ENCODE measurements at regions of chr3 and their contacts with region 1.

Region 1: DNA sequence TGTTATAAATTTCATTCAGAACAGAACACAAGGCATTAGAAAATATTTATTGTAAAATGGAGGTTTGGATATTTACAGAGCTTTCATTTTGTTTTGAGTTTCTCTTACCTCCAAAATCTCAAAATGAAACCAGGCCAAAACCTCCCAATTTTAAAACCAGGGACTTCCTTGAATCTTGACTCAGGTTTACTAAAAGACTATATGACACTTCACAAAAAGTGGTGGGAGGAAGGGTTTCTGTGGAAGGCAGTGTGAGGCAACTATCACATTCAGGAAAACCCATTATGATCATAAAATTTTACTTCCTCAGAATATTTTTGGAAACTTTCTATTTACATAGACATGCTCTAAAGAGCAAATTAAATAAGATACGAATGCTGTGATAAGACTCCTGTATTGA is 205.8 kb upstream of the EOMES start:
- DNase-seq: no peak
- H3K4me3 Mint-ChIP-seq: peak overlapping the region; percentile 62
- H3K27ac Mint-ChIP-seq: peak overlapping the region; percentile 82
- H3K4me1 Mint-ChIP-seq: peaks cover 63% of the 10 kb centered on the region
- H3K27me3 Mint-ChIP-seq: no peaks in the 10 kb centered on the region

Region 2: DNA sequence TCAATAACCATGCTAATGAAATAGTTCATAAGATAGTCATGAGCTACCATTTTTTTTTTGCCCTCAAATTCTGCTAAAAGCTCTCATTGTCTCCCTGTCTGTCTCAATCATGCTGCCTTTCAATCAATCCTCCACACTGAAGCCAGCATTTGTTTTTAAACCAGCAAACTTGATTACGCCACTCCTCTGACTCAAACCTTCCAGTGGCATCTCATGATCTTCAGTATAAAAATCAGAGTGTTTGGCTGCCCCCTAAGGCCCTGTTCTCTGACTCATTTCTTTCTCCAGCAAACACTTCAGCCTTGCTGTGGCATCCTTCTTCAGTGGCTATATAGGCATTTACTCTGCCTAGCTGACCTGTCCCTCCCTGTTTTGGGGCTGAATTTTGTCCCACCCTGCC is 169.8 kb before region 1 on chr3:
- intact Hi-C with region 1: loop called (anchors 2 kb)
- DNase-seq: no peak
- H3K4me3 Mint-ChIP-seq: no peak overlapping the region
- H3K27ac Mint-ChIP-seq: peak overlapping the region; percentile 72
- H3K4me1 Mint-ChIP-seq: peaks cover 23% of the 10 kb centered on the region
- H3K27me3 Mint-ChIP-seq: peaks cover 3% of the 10 kb centered on the region

Region 3: DNA sequence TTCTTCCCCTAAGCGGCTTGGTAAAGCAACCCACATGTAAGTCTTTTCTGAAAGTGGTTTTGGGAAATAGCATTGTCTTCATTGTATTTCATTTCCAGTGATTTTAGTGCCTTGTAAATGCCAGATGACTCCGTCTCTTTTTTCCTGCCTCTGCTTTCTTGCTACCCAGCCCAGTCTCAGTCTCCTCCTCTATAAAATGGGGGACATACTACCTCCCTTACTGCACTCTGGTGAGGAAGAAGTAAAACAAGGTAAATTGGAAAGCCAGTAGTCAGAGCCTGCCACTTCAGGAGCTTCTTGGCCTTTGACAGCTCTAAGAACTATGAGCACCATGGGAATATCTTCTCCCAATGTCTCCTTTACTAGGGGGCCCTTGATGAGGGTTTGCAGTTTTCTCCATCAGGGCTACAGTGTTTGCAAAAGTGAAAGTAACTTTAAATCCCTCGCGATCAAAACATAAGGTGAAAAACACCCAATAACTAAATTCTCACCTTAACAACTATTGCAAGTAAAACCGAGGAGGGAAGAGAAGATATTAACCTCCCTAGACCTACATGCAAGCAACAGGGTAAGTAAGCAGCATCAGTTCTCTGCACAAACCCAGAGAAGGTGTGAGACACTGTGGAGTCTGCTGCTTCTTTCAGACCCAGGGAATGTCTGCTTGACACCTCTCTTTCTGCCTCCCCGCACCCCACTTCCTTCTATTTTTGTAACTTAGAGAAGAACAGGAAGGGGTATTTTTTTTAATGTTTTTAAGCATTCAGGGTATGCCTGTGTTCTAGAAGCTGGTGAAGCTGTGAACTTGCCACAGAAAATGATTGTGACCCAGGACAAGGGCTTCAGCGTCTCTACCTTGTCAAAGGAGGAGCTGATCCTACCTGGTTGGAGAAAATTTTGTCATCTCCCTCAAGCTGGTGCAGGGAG is 46.7 kb before region 1 on chr3:
- intact Hi-C with region 1: loop called (anchors 2 kb)
- DNase-seq: peak; percentile 26
- H3K4me3 Mint-ChIP-seq: peak overlapping the region; percentile 80
- H3K27ac Mint-ChIP-seq: peak overlapping the region; percentile 76
- H3K4me1 Mint-ChIP-seq: peaks cover 48% of the 10 kb centered on the region
- H3K27me3 Mint-ChIP-seq: no peaks in the 10 kb centered on the region

Region 4: GRCh38 chr3:27943106-27943505 is 15.2 kb after region 1 on chr3:
- intact Hi-C with region 1: no loop called
- DNase-seq: no peak
- H3K4me3 Mint-ChIP-seq: no peak overlapping the region
- H3K27ac Mint-ChIP-seq: no peak overlapping the region
- H3K4me1 Mint-ChIP-seq: no peaks in the 10 kb centered on the region
- H3K27me3 Mint-ChIP-seq: peaks cover 2% of the 10 kb centered on the region

Region 5: GRCh38 chr3:27960133-27960532 is 32.3 kb after region 1 on chr3:
- intact Hi-C with region 1: loop called (anchors 1 kb)
- DNase-seq: no peak
- H3K4me3 Mint-ChIP-seq: no peak overlapping the region
- H3K27ac Mint-ChIP-seq: no peak overlapping the region
- H3K4me1 Mint-ChIP-seq: peaks cover 20% of the 10 kb centered on the region
- H3K27me3 Mint-ChIP-seq: no peaks in the 10 kb centered on the region

Region 6: GRCh38 chr3:28241221-28242160 is 313.6 kb after region 1 on chr3 and contains the start of gene CMC1:
- intact Hi-C with region 1: loop called (anchors 2 kb)
- DNase-seq: peak; percentile 87
- H3K4me3 Mint-ChIP-seq: peak within 1 kb of the TSS; percentile 94
- H3K27ac Mint-ChIP-seq: peak within 1 kb of the TSS; percentile 96
- H3K4me1 Mint-ChIP-seq: peaks cover 37% of the 10 kb centered on the region
- H3K27me3 Mint-ChIP-seq: no peaks in the 10 kb centered on the region
- total RNA-seq, gene CMC1: 29.5 and 32.5 TPM in 2 replicates

Region 7: GRCh38 chr3:28940530-28940929 is 1012.6 kb after region 1 on chr3:
- intact Hi-C with region 1: no loop called
- DNase-seq: no peak
- H3K4me3 Mint-ChIP-seq: peak overlapping the region; percentile 32
- H3K27ac Mint-ChIP-seq: peak overlapping the region; percentile 37
- H3K4me1 Mint-ChIP-seq: peaks cover 38% of the 10 kb centered on the region
- H3K27me3 Mint-ChIP-seq: peaks cover 17% of the 10 kb centered on the region